Right ventricle myocardium inferior (tissue), 1 donor: ENCODE measurements at regions of chrX and their contacts with region 1.

Region 1: DNA sequence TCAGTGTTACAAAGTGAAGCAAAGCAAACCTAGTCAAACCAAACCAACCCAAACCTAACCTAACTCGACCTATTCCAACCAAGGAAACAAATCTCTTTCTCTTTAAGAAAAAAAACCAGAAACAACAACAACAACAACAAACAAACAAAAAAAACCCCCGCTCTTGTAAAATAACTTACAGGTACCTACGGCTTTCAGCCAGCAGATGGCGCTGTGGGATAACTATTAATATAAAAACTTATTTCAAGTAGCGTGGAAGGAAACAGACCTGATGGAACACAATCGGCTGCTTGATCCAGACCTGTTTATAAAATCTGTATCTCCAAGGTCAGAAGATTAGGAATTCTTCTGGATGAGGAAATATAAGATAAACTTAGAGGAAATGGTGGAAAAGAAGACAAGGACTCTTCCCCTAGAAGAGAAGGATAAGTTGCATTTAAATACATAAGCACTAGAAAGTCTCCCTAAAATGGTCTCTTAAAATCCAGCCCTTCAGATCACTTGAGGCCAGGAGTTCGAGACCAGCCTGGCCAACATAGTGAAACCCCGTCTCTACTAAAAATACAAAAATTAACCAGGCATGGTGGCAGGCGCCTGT is 34.4 kb upstream of the CDKL5 start:
- DNase-seq: peak; percentile 75
- ATAC-seq: no peak

Region 2: GRCh38 chrX:18410043-18410442 is 19.0 kb after region 1 on chrX:
- intact Hi-C with region 1: no loop called
- DNase-seq: no peak
- ATAC-seq: no peak

Region 3: GRCh38 chrX:19225924-19226323 is 834.9 kb after region 1 on chrX:
- intact Hi-C with region 1: loop called (anchors 10 kb)
- DNase-seq: no peak
- ATAC-seq: no peak